GM18951 (cell line): ENCODE measurements at regions of chr10 and their contacts with region 1.

Region 1: DNA sequence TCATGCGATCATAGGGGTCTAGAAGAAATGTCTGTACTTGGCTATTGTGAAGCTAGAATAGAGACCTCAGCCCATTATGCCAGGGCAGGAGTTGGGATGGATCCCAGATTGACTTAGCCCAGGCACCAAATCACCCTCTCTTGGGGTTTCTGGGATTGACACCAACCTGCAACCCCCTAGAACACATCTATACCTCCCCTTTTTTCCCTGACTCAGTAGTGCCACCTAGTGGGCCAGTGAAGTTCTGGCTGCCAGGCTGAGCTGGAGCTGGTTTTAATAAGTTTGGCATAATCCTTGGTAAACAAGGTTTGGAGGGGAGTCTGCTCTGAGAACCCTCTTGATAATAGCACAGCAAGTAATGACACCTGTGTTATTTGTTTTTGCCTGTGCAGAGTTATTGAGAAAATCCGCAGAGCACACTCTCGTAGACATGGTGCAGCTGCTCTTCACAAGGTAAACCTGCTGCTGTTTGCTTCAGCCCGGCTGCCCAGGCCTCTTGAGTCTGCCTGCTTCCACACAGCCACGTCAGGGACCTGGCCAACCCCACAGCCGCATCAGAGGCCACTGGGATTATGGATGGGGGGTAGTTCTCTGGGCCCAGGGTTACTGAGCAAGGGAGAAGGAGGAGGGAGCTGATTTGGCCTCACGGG is 43.3 kb upstream of the NFKB2 start:
- POLR2A ChIP-seq: no peak

Region 2: DNA sequence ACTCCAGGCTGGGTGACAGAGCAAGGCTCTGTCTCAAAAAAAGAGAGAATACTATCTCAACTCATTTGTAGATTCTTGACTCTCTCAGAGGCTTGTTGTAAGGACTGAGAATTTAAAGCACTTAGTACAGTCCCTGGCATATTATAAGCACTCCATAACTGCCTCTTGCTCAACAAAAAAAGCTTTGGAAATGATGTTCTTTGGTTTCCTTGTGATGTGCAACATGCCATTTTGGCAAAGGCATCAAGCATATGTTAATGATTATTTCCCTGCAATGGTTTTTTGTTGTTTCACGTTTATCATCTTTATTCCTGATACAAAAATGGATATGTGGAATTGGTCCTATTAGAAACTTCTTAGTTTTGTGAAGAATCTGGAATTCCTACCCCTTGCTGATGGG is 184.3 kb before region 1 on chr10:
- in situ Hi-C with region 1: loop called (anchors 10 kb)
- POLR2A ChIP-seq: no peak

Region 3: DNA sequence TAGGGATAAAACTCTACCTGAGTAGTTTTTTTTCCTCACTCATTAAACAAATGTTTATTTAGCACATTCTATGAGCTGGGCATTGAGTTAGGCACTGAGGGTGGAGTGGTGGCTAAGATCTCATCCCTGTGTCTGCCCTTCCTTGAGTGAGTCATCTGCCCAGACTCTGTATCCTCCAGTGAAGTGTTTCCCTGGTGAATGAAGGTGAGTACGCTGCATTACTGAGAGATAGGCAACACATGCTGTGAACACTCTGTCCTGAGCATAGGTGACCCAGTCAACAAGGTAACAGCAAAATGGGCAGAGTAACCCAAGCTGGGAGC is 116.6 kb before region 1 on chr10:
- in situ Hi-C with region 1: loop called (anchors 5 kb)
- POLR2A ChIP-seq: no peak